ENCODE measurements at regions of chr2 and their contacts with region 1.

Region 1: GRCh38 chr2:191740016-191740419 is 62.1 kb downstream of the NABP1 start:
- DNase-seq: peak; percentile 50
- H3K4me3 Mint-ChIP-seq: no peak overlapping the region
- H3K27ac Mint-ChIP-seq: peak overlapping the region; percentile 47
- H3K4me1 Mint-ChIP-seq: peaks cover 12% of the 10 kb centered on the region
- H3K27me3 Mint-ChIP-seq: peaks cover 3% of the 10 kb centered on the region

Region 2: GRCh38 chr2:191611614-191612013 is 128.4 kb before region 1 on chr2:
- CTCF ChIA-PET with region 1: no interaction called
- intact Hi-C with region 1: no loop called
- DNase-seq: no peak
- H3K4me3 Mint-ChIP-seq: no peak overlapping the region
- H3K27ac Mint-ChIP-seq: no peak overlapping the region
- H3K4me1 Mint-ChIP-seq: peaks cover 24% of the 10 kb centered on the region
- H3K27me3 Mint-ChIP-seq: no peaks in the 10 kb centered on the region

Region 3: GRCh38 chr2:191637182-191638078 is 102.6 kb before region 1 on chr2:
- CTCF ChIA-PET with region 1: no interaction called
- intact Hi-C with region 1: loop called (anchors 5 kb)
- DNase-seq: no peak
- H3K4me3 Mint-ChIP-seq: no peak overlapping the region
- H3K27ac Mint-ChIP-seq: peak overlapping the region; percentile 77
- H3K4me1 Mint-ChIP-seq: peaks cover 58% of the 10 kb centered on the region
- H3K27me3 Mint-ChIP-seq: no peaks in the 10 kb centered on the region

Region 4: GRCh38 chr2:191691016-191691735 is 48.8 kb before region 1 on chr2:
- CTCF ChIA-PET with region 1: no interaction called
- intact Hi-C with region 1: loop called (anchors 1 kb)
- DNase-seq: peak; percentile 73
- H3K4me3 Mint-ChIP-seq: no peak overlapping the region
- H3K27ac Mint-ChIP-seq: peak overlapping the region; percentile 72
- H3K4me1 Mint-ChIP-seq: peaks cover 66% of the 10 kb centered on the region
- H3K27me3 Mint-ChIP-seq: no peaks in the 10 kb centered on the region

Region 5: DNA sequence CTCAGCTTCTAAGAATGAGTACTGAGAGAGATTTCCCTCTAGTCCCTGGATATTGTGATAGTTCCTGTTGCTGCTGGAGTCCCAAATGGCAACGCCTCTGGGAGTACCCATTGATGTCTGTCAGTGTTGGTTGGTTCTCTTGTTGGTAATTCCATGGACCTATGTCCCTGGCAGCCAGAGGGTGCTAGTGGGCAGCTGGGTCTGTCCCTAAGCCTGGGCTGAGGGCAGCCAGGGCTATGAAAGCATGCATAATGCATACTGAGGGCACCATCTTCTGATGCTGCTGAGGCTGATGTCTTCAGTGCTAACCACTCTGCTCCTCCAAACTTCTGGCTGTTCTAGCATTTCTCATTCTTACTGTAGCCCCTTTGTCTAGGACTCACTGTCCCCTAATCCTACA is 26.2 kb before region 1 on chr2:
- CTCF ChIA-PET with region 1: no interaction called
- intact Hi-C with region 1: loop called (anchors 1 kb)
- DNase-seq: peak; percentile 46
- H3K4me3 Mint-ChIP-seq: no peak overlapping the region
- H3K27ac Mint-ChIP-seq: no peak overlapping the region
- H3K4me1 Mint-ChIP-seq: no peaks in the 10 kb centered on the region
- H3K27me3 Mint-ChIP-seq: no peaks in the 10 kb centered on the region

Region 6: DNA sequence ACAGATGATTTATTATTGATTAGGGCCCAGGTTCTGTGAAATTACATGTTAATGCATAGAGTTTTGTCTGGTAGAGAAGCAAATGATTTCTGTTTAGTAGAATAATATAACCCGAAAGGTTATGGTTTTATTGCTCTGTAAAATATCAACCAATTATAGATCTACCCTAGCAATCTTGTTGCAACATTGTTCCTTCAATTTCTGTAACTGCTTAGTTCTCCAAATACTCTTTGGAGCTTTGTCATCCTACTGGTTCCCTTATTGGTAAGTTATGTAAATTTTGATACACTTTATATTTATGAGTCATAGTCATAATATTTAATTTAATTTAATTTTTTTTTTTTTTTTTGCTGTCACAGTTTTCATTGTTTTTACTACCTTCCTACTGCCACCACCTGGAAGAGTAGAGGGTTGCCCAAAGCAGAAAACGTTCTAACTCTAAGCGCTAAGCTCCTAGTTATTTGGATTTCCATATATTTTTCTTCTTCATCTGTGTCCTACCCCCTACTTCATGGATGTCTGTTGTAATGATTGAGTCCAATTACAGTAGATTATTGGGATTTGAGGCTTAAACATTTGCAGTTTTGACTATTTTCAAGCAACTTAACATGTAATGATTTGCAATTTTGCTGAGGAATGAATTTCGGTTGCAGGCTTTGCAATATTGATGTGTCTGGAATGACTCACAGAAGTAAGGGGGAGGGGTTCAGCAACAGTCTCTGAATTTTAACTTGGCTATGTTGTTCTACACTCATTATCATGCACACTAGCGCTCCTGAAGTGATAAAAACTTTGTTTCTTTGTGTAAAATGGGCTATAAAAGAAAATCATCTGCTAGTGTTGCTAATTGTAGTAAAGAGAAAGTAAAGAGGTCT is 11.0 kb before region 1 on chr2:
- CTCF ChIA-PET with region 1: no interaction called
- intact Hi-C with region 1: loop called (anchors 1 kb)
- DNase-seq: no peak
- H3K4me3 Mint-ChIP-seq: no peak overlapping the region
- H3K27ac Mint-ChIP-seq: no peak overlapping the region
- H3K4me1 Mint-ChIP-seq: no peaks in the 10 kb centered on the region
- H3K27me3 Mint-ChIP-seq: no peaks in the 10 kb centered on the region

Measured in activated naive CD4-positive, alpha-beta T cell treated with anti-CD3 and anti-CD28 coated beads for 36 hours (primary cell).